K562 (cell line): ENCODE measurements at regions of chr14 and their contacts with region 1.

Region 1: DNA sequence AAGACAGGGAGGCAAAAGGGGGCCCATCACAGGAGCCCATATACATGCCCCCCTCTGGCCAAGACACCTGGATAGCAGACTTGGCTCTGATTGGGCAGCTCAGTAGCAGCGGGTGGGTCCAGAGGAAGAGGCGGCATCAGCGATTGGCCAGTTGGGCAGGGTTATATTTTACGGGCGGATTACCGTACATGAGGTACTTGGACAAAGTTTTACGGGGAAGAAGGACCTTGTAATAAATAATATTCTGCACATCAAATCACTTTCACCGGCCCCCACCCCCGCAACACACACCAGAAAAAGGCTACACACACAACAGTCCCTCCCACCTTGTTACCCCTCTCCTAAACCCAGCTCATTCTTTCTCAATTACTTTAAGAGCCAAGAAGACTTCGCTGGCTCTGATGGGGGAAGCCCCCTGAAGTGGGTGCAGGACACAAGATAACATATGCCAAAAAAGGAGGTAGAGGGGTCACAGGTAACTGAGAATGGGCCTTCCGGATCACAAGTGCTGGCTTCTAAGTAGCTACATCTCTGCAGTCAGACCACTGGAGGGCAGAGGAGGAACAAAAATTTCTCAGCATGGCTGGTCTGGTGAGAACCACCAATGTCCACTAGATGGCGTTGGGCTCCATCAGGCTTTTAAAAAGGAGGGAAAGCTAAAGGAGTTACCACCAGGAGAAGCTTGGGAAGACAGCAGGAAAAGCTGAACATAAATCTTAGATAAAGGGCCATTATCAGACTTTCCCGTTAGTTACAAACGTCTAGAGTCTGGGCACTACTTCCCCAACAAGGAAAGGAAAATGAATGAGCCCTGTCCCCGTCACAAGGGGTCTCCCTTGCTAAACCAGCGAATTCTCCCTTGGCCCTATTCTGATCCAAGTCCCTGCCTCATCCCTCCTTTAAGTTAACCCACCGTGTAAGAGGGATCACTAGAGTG is 11.4 kb upstream of the CDH24 start:
- DNase-seq: peak; percentile 77 to 91 (median 82)
- ATAC-seq: peak; percentile 80
- H3K4me3 ChIP-seq: no peak overlapping the region
- H3K27ac ChIP-seq: peak overlapping the region; percentile 17; the same call in 1 of the 3 replicates
- H3K4me1 ChIP-seq: peaks cover 20 to 26% of the 10 kb centered on the region in 2 experiments
- H3K27me3 ChIP-seq: no peaks in the 10 kb centered on the region
- CTCF ChIP-seq: peak; percentile 99 to 100 (median 100)
- EP300 ChIP-seq: no peak
- POLR2A ChIP-seq: no peak
- RAD21 ChIP-seq: peak; percentile 84 to 91

Region 2: DNA sequence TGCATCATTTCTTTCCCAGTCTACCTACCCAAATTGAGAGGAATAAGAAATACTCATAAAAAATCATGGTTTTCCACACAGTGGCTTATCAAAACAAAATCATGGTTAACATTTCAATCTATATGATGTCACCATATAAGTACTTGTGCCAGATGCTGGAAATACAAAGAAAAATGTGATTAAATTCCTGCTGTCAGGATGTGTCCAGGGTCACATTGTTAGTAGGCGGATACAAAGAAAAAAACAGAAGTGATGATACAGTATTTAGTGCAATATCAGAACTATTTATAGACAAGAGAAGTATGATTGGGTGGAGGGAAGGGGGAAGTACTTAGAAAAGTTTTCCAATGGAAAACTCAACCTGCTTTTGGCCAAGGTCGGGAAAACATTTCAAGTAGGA is 377.6 kb before region 1 on chr14:
- CTCF ChIA-PET with region 1: no interaction called
- POLR2A ChIA-PET with region 1: no interaction called
- in situ Hi-C with region 1: no loop called
- intact Hi-C with region 1: no loop called
- DNase-seq: no peak
- ATAC-seq: no peak
- H3K4me3 ChIP-seq: no peak overlapping the region
- H3K27ac ChIP-seq: no peak overlapping the region
- H3K4me1 ChIP-seq: no peaks in the 10 kb centered on the region; a peak in 1 of 5 replicates
- H3K27me3 ChIP-seq: no peaks in the 10 kb centered on the region
- CTCF ChIP-seq: no peak
- EP300 ChIP-seq: no peak
- POLR2A ChIP-seq: no peak
- RAD21 ChIP-seq: no peak

Region 3: DNA sequence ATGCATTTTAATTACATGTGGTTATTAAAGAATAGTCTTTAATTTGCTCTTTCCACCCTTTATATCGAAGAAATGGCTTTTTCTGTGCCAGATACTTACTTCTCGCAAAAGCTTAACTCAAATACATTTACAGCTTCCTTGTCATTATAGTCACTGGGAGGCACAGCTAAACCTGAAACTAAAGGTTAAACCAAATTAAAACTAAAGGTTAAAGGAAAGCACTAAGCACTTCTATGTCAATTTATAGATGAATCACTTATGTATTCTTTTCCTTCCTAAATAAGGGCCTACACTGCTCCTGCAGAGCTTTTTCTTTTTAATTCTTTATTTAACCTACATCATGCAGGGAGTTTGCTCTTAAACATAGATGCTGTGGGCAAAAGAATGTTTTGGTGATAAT is 67.9 kb before region 1 on chr14:
- CTCF ChIA-PET with region 1: no interaction called
- POLR2A ChIA-PET with region 1: no interaction called
- in situ Hi-C with region 1: no loop called
- intact Hi-C with region 1: no loop called
- DNase-seq: no peak
- ATAC-seq: no peak
- H3K4me3 ChIP-seq: no peak overlapping the region
- H3K27ac ChIP-seq: no peak overlapping the region
- H3K4me1 ChIP-seq: peaks cover 23 to 27% of the 10 kb centered on the region in 2 experiments
- H3K27me3 ChIP-seq: no peaks in the 10 kb centered on the region
- CTCF ChIP-seq: no peak
- EP300 ChIP-seq: no peak
- POLR2A ChIP-seq: no peak
- RAD21 ChIP-seq: no peak

Region 4: GRCh38 chr14:23057757-23058653 is 10.7 kb before region 1 on chr14:
- CTCF ChIA-PET with region 1: interaction called, 4 read pairs
- POLR2A ChIA-PET with region 1: interaction called, 23 read pairs
- in situ Hi-C with region 1: no loop called
- intact Hi-C with region 1: no loop called
- DNase-seq: peak; percentile 78 to 94 (median 84)
- ATAC-seq: peak; percentile 83
- H3K4me3 ChIP-seq: peak overlapping the region; percentile 69
- H3K27ac ChIP-seq: peak overlapping the region; percentile 64
- H3K4me1 ChIP-seq: peaks cover 11 to 45% of the 10 kb centered on the region in 2 experiments
- H3K27me3 ChIP-seq: no peaks in the 10 kb centered on the region
- CTCF ChIP-seq: peak; percentile 92 to 96 (median 94)
- EP300 ChIP-seq: no peak
- POLR2A ChIP-seq: peak; percentile 67
- RAD21 ChIP-seq: peak; percentile 85 to 89

Region 5: GRCh38 chr14:23095196-23096108 is 26.7 kb after region 1 on chr14 and contains the start of gene C14orf119:
- CTCF ChIA-PET with region 1: no interaction called
- POLR2A ChIA-PET with region 1: interaction called, 25 read pairs
- in situ Hi-C with region 1: no loop called
- intact Hi-C with region 1: no loop called
- DNase-seq: peak; percentile 88 to 99 (median 96)
- ATAC-seq: peak; percentile 91
- H3K4me3 ChIP-seq: peak within 1 kb of the TSS; percentile 83
- H3K27ac ChIP-seq: peak within 1 kb of the TSS; percentile 98
- H3K4me1 ChIP-seq: peaks cover 8 to 29% of the 10 kb centered on the region in 2 experiments; a peak in 4 of 5 replicates
- H3K27me3 ChIP-seq: no peaks in the 10 kb centered on the region
- CTCF ChIP-seq: no peak
- EP300 ChIP-seq: peak; percentile 37; the same call in 1 of the 2 replicates
- POLR2A ChIP-seq: peak; percentile 89
- RAD21 ChIP-seq: no peak
- polyA plus RNA-seq, gene C14orf119: 249 to 251 TPM

Region 6: GRCh38 chr14:23113431-23114119 is 44.8 kb after region 1 on chr14:
- CTCF ChIA-PET with region 1: interaction called, 109 read pairs
- POLR2A ChIA-PET with region 1: interaction called, 5 read pairs
- in situ Hi-C with region 1: loop called (anchors 5 kb)
- intact Hi-C with region 1: loop called (anchors 1 kb)
- DNase-seq: peak in 2 of 4 experiments; percentile 42 to 52
- ATAC-seq: no peak
- H3K4me3 ChIP-seq: no peak overlapping the region
- H3K27ac ChIP-seq: no peak overlapping the region
- H3K4me1 ChIP-seq: peaks cover 26 to 48% of the 10 kb centered on the region in 2 experiments
- H3K27me3 ChIP-seq: peaks cover 0 to 13% of the 10 kb centered on the region in 2 experiments; a peak in 3 of 5 replicates
- CTCF ChIP-seq: no peak
- EP300 ChIP-seq: no peak
- POLR2A ChIP-seq: no peak
- RAD21 ChIP-seq: no peak